Ascending aorta (tissue), 2 donors: ENCODE measurements at regions of chr16 and their contacts with region 1.

Region 1: GRCh38 chr16:19067349-19068236 is at the start of gene COQ7:
- DNase-seq: peak; percentile 97 to 99
- H3K4me3 ChIP-seq: peak within 1 kb of the TSS; percentile 71 to 85
- H3K27ac ChIP-seq: peak within 1 kb of the TSS; percentile 96 to 99
- H3K4me1 ChIP-seq: peaks cover 0 to 14% of the 10 kb centered on the region in 2 donors
- H3K27me3 ChIP-seq: no peaks in the 10 kb centered on the region
- CTCF ChIP-seq: no peak
- total RNA-seq, gene COQ7: 3.1 TPM

Region 2: GRCh38 chr16:18801197-18801972 is 266.2 kb before region 1 on chr16 and contains the start of gene ARL6IP1:
- intact Hi-C with region 1: loop called (anchors 1 kb)
- DNase-seq: peak; percentile 99 to 100
- H3K4me3 ChIP-seq: peak within 1 kb of the TSS; percentile 86 to 97
- H3K27ac ChIP-seq: peak within 1 kb of the TSS; percentile 91 to 96
- H3K4me1 ChIP-seq: peaks cover 3 to 21% of the 10 kb centered on the region in 2 donors
- H3K27me3 ChIP-seq: no peaks in the 10 kb centered on the region
- CTCF ChIP-seq: peak; percentile 91 to 98 (median 95)
- total RNA-seq, gene ARL6IP1: 71.6 TPM

Region 3: DNA sequence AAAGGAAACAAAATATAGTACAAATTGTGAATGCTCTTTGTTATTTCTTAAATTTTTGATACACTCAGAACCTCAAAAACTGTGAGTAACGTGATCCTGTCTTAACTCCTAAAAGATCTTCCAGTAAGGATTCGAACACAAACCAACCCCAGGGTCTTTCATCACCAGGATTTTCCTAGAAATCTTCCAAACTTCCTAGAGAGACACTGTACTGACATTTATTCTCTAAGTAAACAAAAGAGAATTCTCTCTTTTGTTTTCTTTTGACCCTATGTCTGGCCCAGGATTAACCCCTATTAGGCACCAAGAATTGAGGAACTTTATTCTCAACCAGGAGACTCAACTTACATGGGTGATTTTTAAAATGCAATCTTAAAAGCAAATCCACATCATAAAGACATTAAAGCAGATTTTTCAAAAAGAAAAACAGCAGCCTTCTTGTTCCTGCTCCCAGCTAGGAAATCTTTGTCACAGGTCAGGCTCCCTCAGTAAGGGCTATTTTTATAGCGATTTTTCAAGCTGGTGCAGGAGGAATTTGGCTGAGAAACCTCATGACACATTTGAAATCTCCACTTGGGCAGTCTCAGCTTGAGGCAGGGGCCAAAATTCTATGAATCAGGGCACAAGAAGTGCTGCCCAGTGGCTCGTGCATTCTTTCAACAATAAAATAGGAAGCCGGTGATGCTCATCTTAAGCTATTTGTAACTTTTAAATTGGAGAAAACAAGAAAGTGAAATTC is 135.2 kb before region 1 on chr16:
- intact Hi-C with region 1: loop called (anchors 5 kb)
- DNase-seq: peak; percentile 49 to 90
- H3K4me3 ChIP-seq: peak overlapping the region in 1 of 2 donors; percentile 38
- H3K27ac ChIP-seq: peak overlapping the region; percentile 92 to 94
- H3K4me1 ChIP-seq: peaks cover 0 to 18% of the 10 kb centered on the region in 2 donors
- H3K27me3 ChIP-seq: no peaks in the 10 kb centered on the region
- CTCF ChIP-seq: no peak

Region 4: GRCh38 chr16:18983565-18984424 is 83.8 kb before region 1 on chr16 and contains the start of gene TMC7:
- intact Hi-C with region 1: loop called (anchors 1 kb)
- DNase-seq: peak in 1 of 2 donors; percentile 84
- H3K4me3 ChIP-seq: peak within 1 kb of the TSS; percentile 44 to 82
- H3K27ac ChIP-seq: peak within 1 kb of the TSS in 1 of 2 donors; percentile 67
- H3K4me1 ChIP-seq: no peaks in the 10 kb centered on the region
- H3K27me3 ChIP-seq: no peaks in the 10 kb centered on the region
- CTCF ChIP-seq: peak; percentile 47 to 81 (median 50)
- total RNA-seq, gene TMC7: 10.0 TPM

Region 5: DNA sequence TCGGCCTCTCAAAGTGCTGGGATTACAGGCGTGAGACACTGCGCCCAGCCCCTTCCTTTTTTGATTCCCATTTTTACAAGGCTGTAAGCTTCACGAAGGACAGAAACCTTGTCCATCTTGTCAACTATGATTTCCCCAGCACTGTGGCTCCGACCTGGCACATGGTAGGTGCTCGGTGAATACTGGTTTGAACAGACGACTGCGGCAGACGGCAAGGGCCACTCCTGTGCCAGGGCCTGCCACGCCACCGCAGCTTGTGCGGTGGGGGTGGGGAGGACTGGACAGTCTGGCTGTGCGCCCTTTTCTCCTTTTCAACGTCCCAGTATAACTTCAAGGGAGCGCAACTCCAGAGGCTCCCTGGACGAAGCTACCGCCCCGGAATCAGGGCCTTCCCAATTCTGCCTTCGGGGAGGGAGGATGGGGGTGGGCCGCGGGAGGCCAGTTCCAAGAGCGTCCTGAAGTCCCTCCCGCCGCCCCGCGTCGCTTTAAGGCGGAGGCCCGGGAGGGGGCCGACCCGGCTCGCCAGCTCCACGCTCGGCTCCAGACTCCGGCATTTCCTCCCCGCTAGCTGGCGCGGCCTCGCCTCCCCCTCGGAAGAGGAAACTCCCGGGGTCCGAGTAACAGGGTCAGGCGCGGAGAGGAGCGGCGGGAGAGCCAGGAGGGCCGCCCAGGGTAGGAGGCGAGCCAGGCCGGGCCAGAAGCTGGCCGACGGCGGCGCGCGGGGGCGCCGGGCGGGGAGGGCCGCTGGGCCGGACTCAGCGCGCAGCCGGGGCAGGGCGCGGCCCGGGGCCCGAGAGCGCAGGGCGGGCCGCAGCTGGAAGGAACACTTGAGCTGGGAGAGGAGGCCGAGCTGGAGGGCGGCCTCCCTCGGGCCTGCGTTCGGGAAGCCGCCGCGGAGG is 46.1 kb after region 1 on chr16 and contains the start of gene ITPRIPL2:
- intact Hi-C with region 1: loop called (anchors 1 kb)
- DNase-seq: peak; percentile 54 to 94
- H3K4me3 ChIP-seq: peak within 1 kb of the TSS; percentile 75 to 92
- H3K27ac ChIP-seq: peak within 1 kb of the TSS; percentile 98 to 99
- H3K4me1 ChIP-seq: peaks cover 12 to 38% of the 10 kb centered on the region in 2 donors
- H3K27me3 ChIP-seq: no peaks in the 10 kb centered on the region
- CTCF ChIP-seq: peak in 1 of 3 experiments; percentile 16
- total RNA-seq, gene ITPRIPL2: 94.5 TPM

Region 6: GRCh38 chr16:19521471-19522396 is 454.1 kb after region 1 on chr16 and contains the start of gene GDE1:
- intact Hi-C with region 1: loop called (anchors 2 kb)
- DNase-seq: peak; percentile 82 to 97
- H3K4me3 ChIP-seq: peak within 1 kb of the TSS; percentile 82 to 89
- H3K27ac ChIP-seq: peak within 1 kb of the TSS; percentile 85 to 91
- H3K4me1 ChIP-seq: peaks cover 6 to 31% of the 10 kb centered on the region in 2 donors
- H3K27me3 ChIP-seq: no peaks in the 10 kb centered on the region
- CTCF ChIP-seq: peak; percentile 17 to 55 (median 50)
- total RNA-seq, gene GDE1: 27.4 TPM

Region 7: GRCh38 chr16:19717771-19718602 is 650.4 kb after region 1 on chr16 and contains the starts of genes IQCK and KNOP1:
- intact Hi-C with region 1: loop called (anchors 5 kb)
- DNase-seq: peak; percentile 48 to 95
- H3K4me3 ChIP-seq: peak within 1 kb of the TSS; percentile 89 to 90
- H3K27ac ChIP-seq: peak within 1 kb of the TSS; percentile 46 to 80
- H3K4me1 ChIP-seq: peaks cover 0 to 12% of the 10 kb centered on the region in 2 donors
- H3K27me3 ChIP-seq: no peaks in the 10 kb centered on the region
- CTCF ChIP-seq: peak in 1 of 3 experiments; percentile 2
- total RNA-seq, gene IQCK: not detected
- total RNA-seq, gene KNOP1: 2.4 TPM